ENCODE measurements at regions of chr6 and their contacts with region 1.

Region 1: DNA sequence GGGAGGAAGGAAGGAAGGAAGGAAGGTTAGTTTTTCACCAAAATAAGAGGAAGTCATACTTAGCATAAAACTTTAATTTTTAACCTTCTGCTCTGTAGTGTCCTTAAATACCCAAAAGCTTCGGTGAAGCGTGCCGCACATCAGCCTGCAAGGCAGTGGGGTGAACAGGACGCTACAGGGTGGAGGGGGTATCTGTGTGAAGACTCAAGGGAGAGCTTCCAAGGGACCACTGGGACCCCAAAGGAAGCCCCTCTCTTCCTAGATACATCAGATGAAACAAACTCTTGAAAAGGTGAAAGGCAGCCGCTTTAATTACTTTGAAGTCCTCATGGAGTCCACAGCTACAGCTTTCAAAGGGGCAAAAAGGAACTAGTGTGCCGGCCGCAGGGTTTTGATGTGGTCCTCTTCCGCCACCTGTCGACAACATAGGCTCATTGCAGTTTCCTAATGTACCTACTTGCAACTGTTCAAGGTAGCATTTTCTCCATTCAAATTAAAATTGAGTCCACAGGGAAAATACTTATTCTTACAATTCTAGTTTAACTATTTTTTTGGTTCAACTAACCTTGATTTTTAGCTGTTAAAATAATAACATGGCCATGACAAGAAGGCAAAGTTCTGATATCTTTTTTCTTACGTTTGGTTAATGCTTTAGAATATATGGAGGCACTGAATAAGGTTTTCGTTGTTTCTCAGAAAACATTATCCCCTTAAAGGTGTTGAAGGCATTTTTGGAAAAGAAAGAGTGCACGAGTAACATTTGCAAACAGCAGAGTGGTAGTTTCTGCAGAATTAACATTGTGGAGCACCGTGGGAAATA is 135.0 kb upstream of the RIPOR2 start:
- DNase-seq: peak; percentile 93
- H3K4me3 Mint-ChIP-seq: peak overlapping the region; percentile 48
- H3K27ac Mint-ChIP-seq: peak overlapping the region; percentile 78
- H3K4me1 Mint-ChIP-seq: peaks cover 9% of the 10 kb centered on the region
- H3K27me3 Mint-ChIP-seq: peaks cover 6% of the 10 kb centered on the region

Region 2: GRCh38 chr6:24581084-24581669 is 489.6 kb before region 1 on chr6:
- intact Hi-C with region 1: loop called (anchors 2 kb)
- DNase-seq: peak; percentile 92
- H3K4me3 Mint-ChIP-seq: no peak overlapping the region
- H3K27ac Mint-ChIP-seq: no peak overlapping the region
- H3K4me1 Mint-ChIP-seq: peaks cover 2% of the 10 kb centered on the region
- H3K27me3 Mint-ChIP-seq: peaks cover 13% of the 10 kb centered on the region

Region 3: DNA sequence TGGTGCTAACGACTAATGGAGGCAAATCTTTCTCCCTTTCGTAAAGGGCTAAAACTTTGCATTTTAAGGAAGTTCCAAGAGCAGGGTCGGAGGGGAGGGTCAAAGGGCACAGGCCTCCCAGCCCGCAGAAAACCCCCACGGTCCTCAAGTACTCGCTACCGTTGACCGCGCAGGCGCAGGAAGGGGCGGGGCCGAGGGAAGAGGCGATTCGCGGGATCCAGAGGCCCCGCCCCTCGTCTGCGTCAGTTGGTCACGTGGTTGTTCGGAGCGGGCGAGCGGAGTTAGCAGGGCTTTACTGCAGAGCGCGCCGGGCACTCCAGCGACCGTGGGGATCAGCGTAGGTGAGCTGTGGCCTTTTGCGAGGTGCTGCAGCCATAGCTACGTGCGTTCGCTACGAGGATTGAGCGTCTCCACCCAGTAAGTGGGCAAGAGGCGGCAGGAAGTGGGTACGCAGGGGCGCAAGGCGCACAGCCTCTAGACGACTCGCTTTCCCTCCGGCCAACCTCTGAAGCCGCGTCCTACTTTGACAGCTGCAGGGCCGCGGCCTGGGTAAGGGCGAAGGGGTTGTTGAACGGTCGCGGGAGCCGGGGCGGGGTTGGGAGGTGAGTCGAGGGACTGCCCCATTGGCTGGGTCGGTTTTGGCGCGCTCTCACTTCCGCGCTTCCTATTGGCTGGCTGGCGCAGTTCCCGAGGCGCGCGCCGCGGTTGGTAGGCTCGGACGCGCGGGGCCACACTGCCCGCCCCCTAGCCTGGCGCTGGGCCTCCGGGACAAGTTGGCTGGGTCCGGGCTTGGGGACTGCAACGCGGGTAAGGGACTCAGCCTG is 295.8 kb before region 1 on chr6 and contains the start of gene GMNN:
- intact Hi-C with region 1: loop called (anchors 5 kb)
- DNase-seq: peak; percentile 100
- H3K4me3 Mint-ChIP-seq: peak within 1 kb of the TSS; percentile 99
- H3K27ac Mint-ChIP-seq: peak within 1 kb of the TSS; percentile 99
- H3K4me1 Mint-ChIP-seq: peaks cover 32% of the 10 kb centered on the region
- H3K27me3 Mint-ChIP-seq: no peaks in the 10 kb centered on the region
- total RNA-seq, gene GMNN: 71.0 and 76.8 TPM in 2 replicates

Region 4: GRCh38 chr6:24855395-24856245 is 215.1 kb before region 1 on chr6:
- intact Hi-C with region 1: loop called (anchors 1 kb)
- DNase-seq: peak; percentile 91
- H3K4me3 Mint-ChIP-seq: peak overlapping the region; percentile 32
- H3K27ac Mint-ChIP-seq: peak overlapping the region; percentile 91
- H3K4me1 Mint-ChIP-seq: peaks cover 49% of the 10 kb centered on the region
- H3K27me3 Mint-ChIP-seq: no peaks in the 10 kb centered on the region

Region 5: GRCh38 chr6:25017932-25018567 is 52.7 kb before region 1 on chr6:
- intact Hi-C with region 1: loop called (anchors 2 kb)
- DNase-seq: peak; percentile 93
- H3K4me3 Mint-ChIP-seq: peak overlapping the region; percentile 31
- H3K27ac Mint-ChIP-seq: peak overlapping the region; percentile 84
- H3K4me1 Mint-ChIP-seq: peaks cover 33% of the 10 kb centered on the region
- H3K27me3 Mint-ChIP-seq: no peaks in the 10 kb centered on the region

Region 6: DNA sequence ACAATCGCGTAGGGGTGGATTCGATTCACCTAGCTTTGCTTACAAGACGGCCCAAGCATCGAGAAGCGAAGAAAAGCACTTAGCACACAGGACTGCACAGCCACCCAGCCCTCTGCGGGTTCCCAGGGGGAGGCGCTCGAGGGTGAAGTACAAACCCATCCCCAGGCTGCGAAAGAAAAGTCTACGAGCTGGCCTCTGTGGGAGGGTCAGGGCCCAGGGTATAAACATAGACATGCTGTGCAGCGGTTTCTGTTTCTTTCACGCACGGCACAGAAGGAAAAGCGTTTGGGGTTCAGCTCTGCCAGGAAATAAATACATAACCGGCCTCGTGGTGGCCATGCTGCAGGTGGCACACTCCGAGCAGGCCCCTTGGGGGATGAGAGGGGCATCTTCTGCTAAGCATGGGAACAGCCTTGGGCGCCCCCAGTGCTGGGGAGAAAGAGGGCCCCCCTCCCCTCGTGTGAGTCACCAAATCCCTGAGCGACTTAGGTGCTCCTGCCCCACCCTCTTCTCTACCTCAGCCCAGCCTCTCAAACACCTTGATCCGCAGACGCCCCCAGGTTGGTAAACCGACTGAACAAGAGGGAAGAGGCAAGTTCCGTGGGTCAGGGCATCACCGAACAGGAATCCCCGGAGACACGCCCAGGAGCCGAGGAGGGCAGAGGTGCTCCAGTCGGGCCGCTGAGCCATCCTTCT is 43.4 kb before region 1 on chr6:
- intact Hi-C with region 1: loop called (anchors 1 kb)
- DNase-seq: peak; percentile 93
- H3K4me3 Mint-ChIP-seq: peak overlapping the region; percentile 83
- H3K27ac Mint-ChIP-seq: peak overlapping the region; percentile 90
- H3K4me1 Mint-ChIP-seq: peaks cover 39% of the 10 kb centered on the region
- H3K27me3 Mint-ChIP-seq: no peaks in the 10 kb centered on the region

Region 7: GRCh38 chr6:25042036-25042521 is 28.7 kb before region 1 on chr6:
- intact Hi-C with region 1: loop called (anchors 2 kb)
- DNase-seq: peak; percentile 80
- H3K4me3 Mint-ChIP-seq: peak overlapping the region; percentile 94
- H3K27ac Mint-ChIP-seq: peak overlapping the region; percentile 97
- H3K4me1 Mint-ChIP-seq: peaks cover 56% of the 10 kb centered on the region
- H3K27me3 Mint-ChIP-seq: no peaks in the 10 kb centered on the region